Posterior cingulate gyrus (tissue), 11 donors: ENCODE measurements at regions of chr6 and their contacts with region 1.

Region 1: GRCh38 chr6:34248727-34249551 is at the start of gene SMIM29:
- DNase-seq: peak; percentile 97 to 100 (median 98)

Region 2: DNA sequence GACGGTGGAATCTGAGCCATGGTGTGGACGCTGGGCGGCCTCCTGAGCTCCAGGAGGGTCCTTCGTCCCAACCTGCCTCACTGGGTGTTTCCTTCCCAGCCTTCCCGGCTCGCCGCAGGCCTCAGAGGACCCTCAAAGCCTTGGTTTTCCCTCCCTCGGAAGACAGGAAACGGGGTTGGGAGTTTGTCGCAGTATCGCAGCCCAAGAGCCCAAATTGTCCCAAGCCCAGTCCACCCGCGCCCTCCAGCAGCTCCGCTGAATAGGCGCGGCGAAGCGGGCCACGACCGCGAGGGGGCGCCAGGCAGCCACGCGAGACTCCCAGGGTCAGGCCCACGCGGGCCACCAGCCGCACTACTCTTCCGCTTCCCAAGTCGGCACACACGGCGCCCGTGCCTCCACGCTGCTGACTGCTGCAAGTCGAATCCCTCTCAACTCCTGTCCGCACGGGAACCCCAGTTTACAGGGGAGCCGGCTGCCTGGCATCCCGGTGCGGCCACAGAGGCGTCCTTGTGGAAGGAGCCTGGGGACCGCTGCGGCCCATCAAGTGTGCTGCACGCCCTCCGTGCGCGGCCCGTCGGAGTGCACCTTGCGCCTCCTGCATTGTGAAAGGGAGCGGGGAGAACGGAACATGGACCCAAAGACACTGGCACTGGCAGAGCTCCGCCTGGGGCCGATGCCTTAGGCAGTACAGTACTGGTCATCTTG is 52.7 kb before region 1 on chr6:
- intact Hi-C with region 1: loop called (anchors 1 kb)
- DNase-seq: peak; percentile 70 to 98 (median 90)

Region 3: GRCh38 chr6:34237722-34238584 is 11.0 kb before region 1 on chr6:
- intact Hi-C with region 1: loop called (anchors 1 kb)
- DNase-seq: peak in 5 of 10 donors; percentile 34 to 91 (median 76)

Region 4: DNA sequence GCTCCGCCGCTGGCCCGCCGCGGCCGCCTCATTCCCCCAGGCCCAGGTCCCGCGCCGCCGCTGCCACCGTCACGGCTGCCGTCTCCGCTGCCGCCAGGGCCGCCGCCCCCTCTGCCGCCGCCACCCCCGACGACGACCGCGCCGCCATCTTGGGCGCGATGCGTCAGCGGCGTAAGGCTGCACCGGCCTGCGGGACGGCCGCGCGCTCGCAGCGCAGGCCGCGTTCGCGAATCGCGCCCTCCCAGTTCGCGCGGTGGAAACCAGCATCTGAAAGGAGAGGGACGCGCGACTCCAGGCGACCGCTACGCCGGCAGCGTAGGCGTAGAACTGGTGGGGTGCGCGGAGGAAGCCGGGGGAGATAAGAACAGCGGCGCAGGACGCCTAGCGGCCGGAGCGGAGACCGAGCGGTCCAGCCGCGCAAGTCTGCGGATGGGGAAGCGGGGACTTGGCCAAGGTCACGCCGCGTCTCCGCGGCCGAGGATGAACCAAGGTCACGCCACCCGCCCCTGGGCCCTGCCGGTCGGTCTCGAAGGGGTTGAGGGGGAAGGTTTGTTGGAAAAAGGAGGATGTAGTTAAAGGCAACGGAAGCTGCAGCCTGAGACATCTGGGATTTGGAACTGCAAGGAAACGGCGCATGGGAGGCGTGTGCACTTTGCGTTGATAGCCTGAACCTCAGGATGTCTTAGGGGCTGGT is 143.7 kb after region 1 on chr6 and contains the start of gene NUDT3:
- intact Hi-C with region 1: loop called (anchors 1 kb)
- DNase-seq: peak; percentile 91 to 99 (median 94)

Region 5: DNA sequence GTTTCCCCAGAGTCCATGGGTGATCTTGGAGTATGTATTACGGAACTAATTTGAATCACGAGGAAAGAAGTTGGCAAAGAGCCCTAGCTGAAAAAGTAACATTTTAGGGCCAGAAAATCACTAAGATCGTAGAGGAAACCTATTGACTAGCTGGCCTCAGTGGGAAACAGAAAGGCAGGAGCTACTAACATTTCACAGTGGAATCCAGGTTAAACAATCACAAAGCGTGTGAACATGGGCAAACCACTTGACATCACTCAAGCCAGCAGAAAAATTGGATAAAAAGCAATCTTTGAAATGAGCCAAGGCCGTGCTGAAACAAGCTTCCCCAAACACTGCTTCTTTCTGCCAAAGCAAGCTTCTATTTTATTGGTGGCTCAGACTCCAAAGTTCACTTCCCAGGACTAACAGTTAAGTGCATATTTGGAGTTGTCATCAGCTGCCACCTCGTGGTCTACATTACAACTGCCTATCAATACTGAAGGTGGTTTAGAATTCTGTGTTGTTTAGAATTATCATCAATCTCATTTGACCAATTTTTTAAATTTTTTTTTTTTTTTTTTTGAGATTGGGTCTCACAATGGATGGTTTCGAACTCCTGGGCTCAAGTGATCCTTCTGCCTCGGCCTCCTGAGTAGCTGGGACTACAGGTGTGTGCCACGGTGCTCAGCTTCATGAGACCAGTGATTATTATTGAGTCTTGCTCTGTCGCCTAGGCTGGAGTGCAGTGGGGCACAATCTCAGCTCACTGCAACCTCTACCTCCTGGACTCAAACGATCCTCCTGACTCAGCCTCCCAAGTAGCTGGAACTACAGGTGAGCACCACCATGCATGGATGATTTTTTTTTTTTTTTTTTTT is 166.3 kb after region 1 on chr6:
- intact Hi-C with region 1: loop called (anchors 1 kb)
- DNase-seq: peak in 5 of 10 donors; percentile 29 to 64 (median 51)